ENCODE measurements at regions of chr1 and their contacts with region 1.

Region 1: GRCh38 chr1:40849801-40850592 is 12.2 kb downstream of the CITED4 start:
- DNase-seq: peak; percentile 80
- ATAC-seq: peak; percentile 94

Region 2: GRCh38 chr1:40612345-40612831 is 237.6 kb before region 1 on chr1:
- intact Hi-C with region 1: loop called (anchors 2 kb)
- DNase-seq: peak; percentile 53
- ATAC-seq: peak; percentile 93

Region 3: DNA sequence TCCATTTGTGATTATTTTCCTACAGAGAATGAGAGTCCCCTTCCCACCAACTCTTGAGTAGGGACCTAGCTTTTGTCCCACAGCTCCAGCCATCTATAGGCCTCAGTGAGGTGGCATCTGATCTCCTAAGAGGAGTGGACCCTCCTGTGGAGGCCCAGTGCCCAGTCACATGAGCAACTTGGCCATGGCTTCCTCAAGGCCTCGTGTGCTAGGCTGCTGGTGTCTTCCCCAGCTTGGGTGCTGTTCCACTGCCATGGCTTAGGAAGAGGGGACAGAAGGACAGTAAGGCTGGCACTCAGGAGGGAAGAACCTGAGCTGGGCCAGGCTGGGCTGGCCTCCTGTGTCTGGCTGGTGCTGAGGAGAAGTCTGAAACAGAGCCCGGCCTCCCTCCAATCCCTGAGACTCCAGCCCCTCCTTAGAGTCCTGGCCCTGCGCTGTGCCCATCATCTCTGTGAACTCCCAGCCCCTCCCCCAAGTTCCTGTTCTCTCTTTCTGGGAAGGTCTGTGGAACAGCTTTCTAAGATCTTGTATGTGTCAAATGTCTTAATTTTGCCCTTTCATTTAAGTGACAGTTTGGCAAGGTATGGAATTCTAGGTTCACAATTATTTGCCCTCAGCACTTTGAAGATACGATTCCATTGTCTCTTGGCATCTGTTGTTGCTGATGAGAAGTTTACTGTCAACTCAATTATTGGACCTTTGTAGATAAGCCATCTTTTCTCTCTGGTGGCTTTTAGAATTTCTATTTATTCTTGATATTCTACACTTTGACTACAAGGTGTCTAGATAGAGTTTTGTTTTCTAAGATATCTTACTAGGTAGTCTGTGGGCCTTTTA is 73.5 kb before region 1 on chr1:
- intact Hi-C with region 1: loop called (anchors 5 kb)
- DNase-seq: no peak
- ATAC-seq: no peak

Region 4: DNA sequence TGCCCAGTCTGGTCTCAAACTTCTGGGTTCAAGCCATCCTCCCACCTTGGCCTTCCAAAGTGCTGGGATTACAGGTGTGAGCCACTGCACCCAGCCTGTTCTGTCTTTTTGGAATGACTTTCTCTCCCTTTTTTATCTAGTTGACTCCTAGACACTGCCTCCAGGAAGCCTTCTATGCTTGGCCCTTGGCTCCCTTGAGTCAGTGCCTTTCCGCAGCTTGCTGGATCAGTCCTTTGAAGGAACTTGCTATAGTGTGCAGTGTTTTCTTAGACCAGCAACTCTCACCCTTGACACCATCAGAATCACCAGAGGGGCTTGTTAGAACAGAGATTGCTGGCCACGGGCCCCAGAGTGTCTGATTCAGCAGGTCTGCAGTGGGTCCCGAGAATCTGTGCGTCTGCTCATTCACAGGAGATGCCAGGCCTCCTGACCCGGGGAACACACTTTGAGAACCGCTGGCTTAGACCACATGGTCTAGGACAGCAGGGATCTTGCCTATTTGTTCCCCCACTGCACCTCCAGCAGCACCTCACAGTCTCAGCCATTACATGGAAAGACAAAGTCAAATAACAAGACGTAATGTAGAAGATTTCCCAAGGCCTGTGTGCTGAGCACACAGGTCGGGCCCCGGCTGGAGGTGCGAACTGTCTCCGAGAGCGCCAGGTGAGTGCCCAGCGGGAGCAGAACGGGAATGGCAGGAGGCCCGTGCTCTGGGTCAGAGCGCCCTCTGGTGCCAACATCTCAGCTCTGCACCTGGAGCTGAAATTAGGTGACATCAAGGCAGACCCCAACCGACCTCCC is 102.1 kb after region 1 on chr1:
- intact Hi-C with region 1: loop called (anchors 2 kb)
- DNase-seq: peak; percentile 79
- ATAC-seq: peak; percentile 88

Region 5: DNA sequence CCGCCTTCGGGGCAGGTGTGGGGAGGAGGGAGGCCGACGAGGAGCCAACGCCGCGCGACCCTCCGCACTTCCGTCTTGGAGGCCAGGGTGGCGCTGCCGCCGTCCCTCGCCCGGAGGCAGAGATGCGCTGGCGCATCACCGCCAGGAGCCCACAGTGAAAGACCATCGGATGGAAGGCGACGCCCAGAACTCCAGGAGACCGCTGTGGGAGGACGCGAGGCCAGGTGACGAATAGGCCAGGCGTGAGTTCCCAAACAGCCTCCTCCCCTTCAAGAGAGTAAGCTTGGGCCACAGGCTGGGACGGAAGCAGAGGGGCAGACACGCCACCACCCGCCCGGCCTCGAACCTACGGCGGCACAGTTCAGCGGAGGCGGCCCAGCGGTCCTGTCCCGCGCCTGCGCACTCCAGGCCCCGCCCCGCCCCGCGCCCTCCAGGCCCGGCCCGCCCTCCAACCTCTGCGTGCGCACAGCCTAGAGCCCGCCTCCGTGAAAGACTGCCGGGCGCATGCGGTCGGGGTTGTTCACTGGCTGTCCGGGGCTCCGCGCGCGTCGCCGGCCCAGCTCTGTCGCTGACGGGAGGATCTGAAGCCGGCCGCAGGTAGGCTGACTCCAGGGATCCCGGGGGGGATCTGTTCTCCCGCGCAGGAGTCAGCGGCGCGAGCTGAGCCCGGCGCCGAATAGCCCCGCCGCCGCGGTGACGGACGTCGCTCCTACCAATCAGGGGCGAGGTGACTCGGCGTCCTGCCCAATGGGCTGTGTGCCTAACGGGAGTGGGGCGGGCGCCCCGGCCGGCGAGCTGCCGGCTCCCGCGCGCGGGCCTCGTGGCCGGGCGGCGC is 129.5 kb after region 1 on chr1 and contains the start of gene CTPS1:
- intact Hi-C with region 1: no loop called
- DNase-seq: peak; percentile 97
- ATAC-seq: peak; percentile 97
- total RNA-seq, gene CTPS1: 7.2 TPM